Brain microvascular endothelial cell (primary cell): ENCODE measurements at regions of chr6 and their contacts with region 1.

Region 1: GRCh38 chr6:105397987-105398386 is 4.9 kb downstream of the PREP start:
- DNase-seq: no peak
- H3K4me3 ChIP-seq: no peak overlapping the region
- H3K27ac ChIP-seq: no peak overlapping the region
- H3K27me3 ChIP-seq: no peaks in the 10 kb centered on the region
- CTCF ChIP-seq: no peak

Region 2: GRCh38 chr6:104623052-104623690 is 774.8 kb before region 1 on chr6:
- in situ Hi-C with region 1: no loop called
- DNase-seq: no peak
- H3K4me3 ChIP-seq: no peak overlapping the region
- H3K27ac ChIP-seq: no peak overlapping the region
- H3K27me3 ChIP-seq: no peaks in the 10 kb centered on the region
- CTCF ChIP-seq: peak; percentile 35

Region 3: GRCh38 chr6:105112577-105112976 is 285.4 kb before region 1 on chr6:
- in situ Hi-C with region 1: loop called (anchors 25 kb)
- DNase-seq: no peak
- H3K4me3 ChIP-seq: no peak overlapping the region
- H3K27ac ChIP-seq: no peak overlapping the region
- H3K27me3 ChIP-seq: no peaks in the 10 kb centered on the region
- CTCF ChIP-seq: no peak